K562 (cell line): ENCODE measurements at regions of chr22 and their contacts with region 1.

Region 1: DNA sequence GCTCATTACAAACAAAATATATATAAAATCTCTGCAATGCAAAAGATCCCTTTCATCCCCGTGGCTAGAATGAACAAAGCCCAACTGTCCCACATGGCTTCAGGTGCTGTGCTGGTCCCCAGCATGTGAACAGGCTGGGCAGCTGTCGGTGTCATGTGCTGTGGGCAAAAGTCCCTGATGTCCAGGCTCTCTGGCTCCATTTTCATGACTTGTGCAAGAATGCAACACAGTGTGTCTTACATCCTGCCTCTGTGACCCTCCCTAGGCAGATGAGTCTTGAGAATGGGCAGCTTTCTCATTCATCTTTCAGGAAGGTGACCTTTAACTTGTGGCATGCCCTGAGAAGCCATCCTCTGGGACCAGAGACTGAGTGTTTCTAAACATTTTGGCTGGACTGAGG is 14.5 kb downstream of the GUCD1 start:
- DNase-seq: no peak
- ATAC-seq: no peak
- H3K4me3 ChIP-seq: no peak overlapping the region
- H3K27ac ChIP-seq: no peak overlapping the region
- H3K4me1 ChIP-seq: peaks cover 0 to 4% of the 10 kb centered on the region in 2 experiments; a peak in 1 of 5 replicates
- H3K27me3 ChIP-seq: no peaks in the 10 kb centered on the region
- CTCF ChIP-seq: no peak
- EP300 ChIP-seq: no peak
- POLR2A ChIP-seq: no peak
- RAD21 ChIP-seq: no peak

Region 2: GRCh38 chr22:24516301-24516737 is 24.2 kb before region 1 on chr22:
- CTCF ChIA-PET with region 1: no interaction called
- POLR2A ChIA-PET with region 1: no interaction called
- in situ Hi-C with region 1: no loop called
- intact Hi-C with region 1: no loop called
- DNase-seq: no peak
- ATAC-seq: no peak
- H3K4me3 ChIP-seq: no peak overlapping the region
- H3K27ac ChIP-seq: no peak overlapping the region
- H3K4me1 ChIP-seq: peaks cover 4 to 11% of the 10 kb centered on the region in 2 experiments; a peak in 4 of 5 replicates
- H3K27me3 ChIP-seq: no peaks in the 10 kb centered on the region
- CTCF ChIP-seq: no peak
- EP300 ChIP-seq: no peak
- POLR2A ChIP-seq: no peak
- RAD21 ChIP-seq: no peak

Region 3: GRCh38 chr22:24555157-24556039 is 14.9 kb after region 1 on chr22 and contains the start of gene SNRPD3:
- CTCF ChIA-PET with region 1: no interaction called
- POLR2A ChIA-PET with region 1: interaction called, 13 read pairs
- in situ Hi-C with region 1: no loop called
- intact Hi-C with region 1: no loop called
- DNase-seq: peak; percentile 94 to 98 (median 96)
- ATAC-seq: peak; percentile 92
- H3K4me3 ChIP-seq: peak within 1 kb of the TSS; percentile 59
- H3K27ac ChIP-seq: peak within 1 kb of the TSS; percentile 93
- H3K4me1 ChIP-seq: peaks cover 22% of the 10 kb centered on the region in 2 experiments; a peak in 4 of 5 replicates
- H3K27me3 ChIP-seq: no peaks in the 10 kb centered on the region
- CTCF ChIP-seq: no peak
- EP300 ChIP-seq: no peak
- POLR2A ChIP-seq: peak; percentile 82
- RAD21 ChIP-seq: no peak
- polyA plus RNA-seq, gene SNRPD3: 274 to 281 TPM